ENCODE measurements at regions of chr21 and their contacts with region 1.

Region 1: DNA sequence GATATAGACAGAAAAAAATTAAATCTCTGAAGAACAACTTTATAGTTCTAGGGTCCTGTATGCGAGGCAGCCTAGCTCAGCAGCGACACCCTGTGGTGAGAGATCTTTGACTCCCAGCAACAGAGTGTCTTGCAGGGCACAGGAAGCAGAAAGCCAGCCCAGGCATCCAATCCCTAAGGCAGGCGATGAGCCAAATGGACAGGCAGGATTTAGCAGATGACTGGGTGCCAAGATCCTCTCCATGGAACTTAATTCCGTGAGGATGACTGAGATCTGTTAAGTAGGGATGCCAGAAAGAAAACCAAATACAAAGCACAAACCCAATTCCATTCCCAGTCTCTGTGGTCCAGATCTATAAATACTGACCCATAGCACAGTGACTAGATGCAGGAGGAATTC is 38.8 kb downstream of the HLCS start:
- DNase-seq: peak; percentile 80 to 83
- H3K4me3 ChIP-seq: no peak overlapping the region
- H3K27ac ChIP-seq: no peak overlapping the region
- H3K4me1 ChIP-seq: peaks cover 0 to 15% (median 5%) of the 10 kb centered on the region in 4 donors
- H3K27me3 ChIP-seq: no peaks in the 10 kb centered on the region
- CTCF ChIP-seq: peak; percentile 78 to 91

Region 2: GRCh38 chr21:36429947-36430546 is 497.7 kb before region 1 on chr21:
- intact Hi-C with region 1: loop called (anchors 10 kb)
- DNase-seq: peak; percentile 89 to 91
- H3K4me3 ChIP-seq: peak overlapping the region; percentile 28 to 43
- H3K27ac ChIP-seq: peak overlapping the region; percentile 61 to 66
- H3K4me1 ChIP-seq: peaks cover 0 to 23% (median 1%) of the 10 kb centered on the region in 4 donors
- H3K27me3 ChIP-seq: no peaks in the 10 kb centered on the region
- CTCF ChIP-seq: peak; percentile 12 to 27

Region 3: GRCh38 chr21:36504067-36505058 is 423.4 kb before region 1 on chr21:
- intact Hi-C with region 1: loop called (anchors 5 kb)
- DNase-seq: no peak
- H3K4me3 ChIP-seq: no peak overlapping the region
- H3K27ac ChIP-seq: no peak overlapping the region
- H3K4me1 ChIP-seq: peaks cover 0 to 16% (median 7%) of the 10 kb centered on the region in 4 donors
- H3K27me3 ChIP-seq: peaks cover 0 to 2% of the 10 kb centered on the region in 2 donors
- CTCF ChIP-seq: peak; percentile 84 to 86

Region 4: DNA sequence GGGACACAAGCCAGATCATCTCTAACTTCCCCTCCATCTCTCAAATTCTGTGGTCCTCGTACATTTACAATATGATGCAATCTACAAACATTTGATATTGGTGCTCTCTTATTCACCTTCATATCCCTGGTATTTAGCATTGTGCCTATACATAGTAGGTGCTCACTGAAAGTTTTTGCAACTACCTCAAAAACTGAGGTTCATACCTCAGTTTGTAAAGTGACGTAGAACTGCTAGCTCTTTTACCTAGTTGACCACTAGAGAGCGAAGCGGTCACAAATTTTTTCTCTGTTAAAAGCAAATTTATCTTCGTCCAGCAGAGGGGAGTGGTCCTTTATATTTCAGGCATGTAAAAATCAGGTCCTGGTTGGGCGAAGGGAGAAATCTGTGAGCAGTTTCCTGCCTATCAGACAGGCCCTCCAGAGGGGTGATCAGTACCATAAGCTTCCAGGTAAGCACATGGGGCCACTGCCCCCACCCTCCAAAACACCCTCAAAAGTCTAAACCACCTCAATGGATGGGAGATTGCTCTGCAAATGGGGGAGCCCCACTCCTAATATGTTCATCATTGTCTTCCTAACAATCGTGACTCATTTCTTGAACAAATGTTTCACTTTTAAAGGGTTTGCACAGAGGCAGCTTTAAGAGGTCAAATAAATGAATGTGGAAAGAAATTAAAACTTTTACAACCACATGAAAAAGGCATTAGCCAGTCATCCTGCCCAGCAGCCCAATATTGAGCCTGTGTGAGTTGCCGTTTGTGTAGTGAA is 49.3 kb after region 1 on chr21:
- intact Hi-C with region 1: no loop called
- DNase-seq: no peak
- H3K4me3 ChIP-seq: no peak overlapping the region
- H3K27ac ChIP-seq: no peak overlapping the region
- H3K4me1 ChIP-seq: peaks cover 0 to 20% (median 12%) of the 10 kb centered on the region in 4 donors
- H3K27me3 ChIP-seq: no peaks in the 10 kb centered on the region
- CTCF ChIP-seq: peak; percentile 59 to 62

Measured in tibial artery (tissue), 4 donors.